CD8-positive, alpha-beta T cell (primary cell): ENCODE measurements at regions of chr2 and their contacts with region 1.

Region 1: DNA sequence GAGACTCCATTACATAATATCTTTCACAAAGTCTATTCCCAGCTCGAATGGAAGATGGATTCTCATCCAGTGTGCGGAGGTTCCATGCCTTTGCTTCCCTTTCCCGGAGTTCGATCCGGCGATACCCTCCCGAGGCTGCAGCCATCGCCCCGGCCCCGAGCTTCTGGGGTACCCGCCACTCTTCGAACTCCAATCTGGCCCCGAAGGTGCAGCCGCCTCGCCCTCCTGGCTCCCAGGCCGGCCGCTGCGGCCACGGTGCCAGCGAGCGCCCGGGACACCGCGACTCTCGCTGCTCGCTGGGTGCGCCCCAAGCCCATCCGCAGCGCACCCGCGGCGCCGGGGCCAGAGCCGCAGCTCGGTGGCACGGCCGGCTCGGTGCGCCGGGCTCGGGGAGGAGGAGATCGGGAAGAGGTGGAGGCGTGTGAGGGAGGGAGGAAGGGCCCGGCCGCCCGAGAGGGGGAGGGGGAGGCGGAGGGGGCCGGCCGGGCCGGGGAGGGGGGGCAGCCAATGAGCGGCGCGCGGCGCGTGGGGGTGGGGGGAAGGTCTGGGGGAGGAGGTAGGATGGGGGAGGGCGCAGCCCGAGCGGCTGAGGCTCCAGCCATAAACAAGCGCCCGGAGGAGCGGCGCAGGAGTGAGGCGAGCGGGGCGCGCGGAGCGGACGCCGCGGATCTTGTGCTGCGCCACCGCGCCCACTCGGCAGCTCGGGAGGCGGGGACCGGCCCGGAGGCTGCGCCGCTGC is at the start of gene CRIM1:
- DNase-seq: peak in 7 of 9 experiments; percentile 17 to 73 (median 44)
- ATAC-seq: peak; percentile 48
- H3K4me3 ChIP-seq: peak within 1 kb of the TSS; percentile 52 to 62
- H3K4me3 Mint-ChIP-seq: peak within 1 kb of the TSS; percentile 89
- H3K27ac ChIP-seq: no peak within 1 kb of the TSS
- H3K27ac Mint-ChIP-seq: no peak within 1 kb of the TSS
- H3K4me1 ChIP-seq: peaks cover 23% of the 10 kb centered on the region
- H3K4me1 Mint-ChIP-seq: peaks cover 29% of the 10 kb centered on the region
- H3K27me3 ChIP-seq: peaks cover 0 to 10% of the 10 kb centered on the region in 2 experiments
- H3K27me3 Mint-ChIP-seq: peaks cover 38% of the 10 kb centered on the region
- CTCF ChIP-seq: no peak
- total RNA-seq, gene CRIM1: 4.3 to 5.3 TPM

Region 2: DNA sequence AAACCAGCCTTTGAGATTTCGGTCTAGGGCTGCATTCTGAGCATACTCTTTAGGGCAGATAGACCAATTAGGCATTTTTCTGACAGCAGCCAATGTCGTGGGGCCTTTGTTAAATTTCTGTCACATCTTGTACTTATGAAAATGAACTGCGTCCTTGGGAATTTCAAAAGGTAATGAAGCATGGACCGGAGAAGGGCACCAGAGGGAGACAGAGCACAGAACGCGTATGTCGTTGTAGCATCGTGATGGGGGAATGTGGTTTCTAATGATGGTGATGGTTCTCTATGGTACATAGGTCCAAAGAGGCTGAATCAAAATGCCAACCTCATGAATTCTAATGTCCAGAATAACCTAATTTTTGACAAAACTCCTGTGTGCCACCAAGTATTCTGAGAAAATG is 483.6 kb before region 1 on chr2:
- CTCF ChIA-PET with region 1: interaction called, 3 read pairs
- POLR2A ChIA-PET with region 1: no interaction called
- intact Hi-C with region 1: loop called in 1 of 2 experiments (anchors 10 kb)
- DNase-seq: no peak
- ATAC-seq: no peak
- H3K4me3 ChIP-seq: no peak overlapping the region
- H3K4me3 Mint-ChIP-seq: no peak overlapping the region
- H3K27ac ChIP-seq: no peak overlapping the region
- H3K27ac Mint-ChIP-seq: no peak overlapping the region
- H3K4me1 ChIP-seq: no peaks in the 10 kb centered on the region
- H3K4me1 Mint-ChIP-seq: no peaks in the 10 kb centered on the region
- H3K27me3 ChIP-seq: no peaks in the 10 kb centered on the region
- H3K27me3 Mint-ChIP-seq: peaks cover 4% of the 10 kb centered on the region
- CTCF ChIP-seq: no peak

Region 3: GRCh38 chr2:35973132-35973736 is 382.1 kb before region 1 on chr2:
- CTCF ChIA-PET with region 1: interaction called, 3 read pairs
- POLR2A ChIA-PET with region 1: no interaction called
- intact Hi-C with region 1: loop called (anchors 1 to 10 kb)
- DNase-seq: peak in 2 of 9 experiments; percentile 35 to 56
- ATAC-seq: no peak
- H3K4me3 ChIP-seq: no peak overlapping the region
- H3K4me3 Mint-ChIP-seq: no peak overlapping the region
- H3K27ac ChIP-seq: no peak overlapping the region
- H3K27ac Mint-ChIP-seq: no peak overlapping the region
- H3K4me1 ChIP-seq: peaks cover 9% of the 10 kb centered on the region
- H3K4me1 Mint-ChIP-seq: peaks cover 4% of the 10 kb centered on the region
- H3K27me3 ChIP-seq: no peaks in the 10 kb centered on the region
- H3K27me3 Mint-ChIP-seq: no peaks in the 10 kb centered on the region
- CTCF ChIP-seq: peak; percentile 30

Region 4: DNA sequence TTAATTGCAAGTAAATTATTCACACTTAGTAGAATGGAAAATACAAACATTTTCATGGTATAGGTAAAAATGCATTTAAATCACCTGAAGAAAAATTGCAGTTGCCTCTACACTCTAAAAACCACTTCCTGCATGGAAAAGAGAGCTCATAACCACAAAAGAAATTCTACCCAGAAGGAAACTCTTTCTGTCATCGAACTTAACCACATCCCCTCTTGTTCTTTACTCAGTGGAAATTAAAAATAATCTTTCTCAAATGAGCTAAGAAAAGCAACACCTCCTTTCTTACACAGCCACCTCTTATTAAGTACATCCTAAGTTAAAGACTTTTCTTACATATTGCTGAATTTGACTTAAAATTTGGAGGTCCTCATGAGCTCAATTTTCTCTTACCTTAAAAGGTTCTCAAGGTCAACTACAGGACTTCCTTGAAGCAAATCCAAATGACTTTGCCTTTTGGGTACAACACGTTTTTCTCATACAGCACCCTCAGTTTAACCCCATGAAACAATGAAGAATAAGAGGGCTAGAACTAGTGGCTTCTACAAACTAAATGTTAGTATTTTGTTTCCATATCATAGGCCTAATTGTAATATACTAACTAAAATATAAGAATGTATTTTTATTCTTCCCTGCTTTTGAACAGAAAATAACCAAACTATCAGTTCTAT is 108.9 kb before region 1 on chr2:
- CTCF ChIA-PET with region 1: interaction called, 3 read pairs
- POLR2A ChIA-PET with region 1: interaction called, 3 read pairs
- intact Hi-C with region 1: loop called in 1 of 2 experiments (anchors 10 kb)
- DNase-seq: peak in 2 of 9 experiments; percentile 56 to 78
- ATAC-seq: peak; percentile 84
- H3K4me3 ChIP-seq: no peak overlapping the region
- H3K4me3 Mint-ChIP-seq: peak overlapping the region; percentile 32
- H3K27ac ChIP-seq: peak overlapping the region in 1 of 2 experiments; percentile 15
- H3K27ac Mint-ChIP-seq: peak overlapping the region; percentile 9
- H3K4me1 ChIP-seq: peaks cover 42% of the 10 kb centered on the region
- H3K4me1 Mint-ChIP-seq: peaks cover 59% of the 10 kb centered on the region
- H3K27me3 ChIP-seq: no peaks in the 10 kb centered on the region
- H3K27me3 Mint-ChIP-seq: no peaks in the 10 kb centered on the region
- CTCF ChIP-seq: no peak

Region 5: GRCh38 chr2:36507408-36507812 is 152.1 kb after region 1 on chr2:
- CTCF ChIA-PET with region 1: no interaction called
- POLR2A ChIA-PET with region 1: no interaction called
- intact Hi-C with region 1: loop called (anchors 1 to 5 kb)
- DNase-seq: peak in 6 of 9 experiments; percentile 6 to 51 (median 13)
- ATAC-seq: no peak
- H3K4me3 ChIP-seq: no peak overlapping the region
- H3K4me3 Mint-ChIP-seq: no peak overlapping the region
- H3K27ac ChIP-seq: no peak overlapping the region
- H3K27ac Mint-ChIP-seq: no peak overlapping the region
- H3K4me1 ChIP-seq: no peaks in the 10 kb centered on the region
- H3K4me1 Mint-ChIP-seq: no peaks in the 10 kb centered on the region
- H3K27me3 ChIP-seq: no peaks in the 10 kb centered on the region
- H3K27me3 Mint-ChIP-seq: no peaks in the 10 kb centered on the region
- CTCF ChIP-seq: peak; percentile 39

Region 6: DNA sequence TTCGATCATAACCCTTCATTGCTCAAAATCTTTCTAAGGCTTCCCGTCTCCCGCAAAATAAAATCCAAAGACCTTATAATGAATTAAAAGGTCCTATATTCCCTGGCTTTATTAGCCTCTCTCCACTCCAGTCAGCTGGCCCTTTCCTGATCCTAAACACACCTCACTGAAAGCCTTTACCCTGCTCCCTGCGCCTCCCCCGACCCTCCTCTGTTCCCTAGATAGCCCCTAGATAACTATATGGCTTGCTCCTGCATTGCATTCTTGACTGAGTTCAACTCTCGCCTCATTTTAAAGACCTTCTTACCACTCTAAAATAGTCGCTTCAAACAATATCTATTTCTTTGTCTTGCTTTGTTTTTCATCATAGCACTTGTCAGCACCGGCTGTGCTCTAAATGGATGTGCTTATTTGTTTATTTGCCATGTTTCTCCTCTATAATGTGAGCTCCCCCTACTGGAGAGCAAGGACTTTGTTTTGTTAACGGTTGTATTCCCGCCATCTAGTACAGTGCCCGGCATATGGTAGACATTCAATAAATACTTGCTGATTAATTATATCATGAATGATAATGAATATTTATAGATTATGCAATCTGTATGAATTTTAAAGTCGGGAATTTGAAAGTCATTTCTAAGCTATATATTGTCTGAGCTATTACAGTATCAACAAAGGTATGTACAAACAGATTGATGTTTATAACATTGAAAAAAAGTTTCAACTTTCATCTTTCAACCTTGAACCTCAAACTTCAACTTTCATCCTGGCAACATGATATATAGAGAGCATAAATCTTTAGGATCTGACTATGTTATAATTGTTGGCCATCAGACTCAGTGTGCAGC is 308.8 kb after region 1 on chr2:
- CTCF ChIA-PET with region 1: interaction called, 18 read pairs
- POLR2A ChIA-PET with region 1: no interaction called
- intact Hi-C with region 1: loop called (anchors 1 to 5 kb)
- DNase-seq: peak in 2 of 9 experiments; percentile 44 to 59
- ATAC-seq: no peak
- H3K4me3 ChIP-seq: no peak overlapping the region
- H3K4me3 Mint-ChIP-seq: no peak overlapping the region
- H3K27ac ChIP-seq: no peak overlapping the region
- H3K27ac Mint-ChIP-seq: no peak overlapping the region
- H3K4me1 ChIP-seq: no peaks in the 10 kb centered on the region
- H3K4me1 Mint-ChIP-seq: no peaks in the 10 kb centered on the region
- H3K27me3 ChIP-seq: no peaks in the 10 kb centered on the region
- H3K27me3 Mint-ChIP-seq: peaks cover 9% of the 10 kb centered on the region
- CTCF ChIP-seq: peak; percentile 61

Region 7: GRCh38 chr2:36717603-36718266 is 362.4 kb after region 1 on chr2:
- CTCF ChIA-PET with region 1: no interaction called
- POLR2A ChIA-PET with region 1: no interaction called
- intact Hi-C with region 1: no loop called
- DNase-seq: no peak
- ATAC-seq: no peak
- H3K4me3 ChIP-seq: no peak overlapping the region
- H3K4me3 Mint-ChIP-seq: no peak overlapping the region
- H3K27ac ChIP-seq: no peak overlapping the region
- H3K27ac Mint-ChIP-seq: no peak overlapping the region
- H3K4me1 ChIP-seq: no peaks in the 10 kb centered on the region
- H3K4me1 Mint-ChIP-seq: no peaks in the 10 kb centered on the region
- H3K27me3 ChIP-seq: no peaks in the 10 kb centered on the region
- H3K27me3 Mint-ChIP-seq: no peaks in the 10 kb centered on the region
- CTCF ChIP-seq: no peak